GM12878 (cell line): ENCODE measurements at regions of chr19 and their contacts with region 1.

Region 1: DNA sequence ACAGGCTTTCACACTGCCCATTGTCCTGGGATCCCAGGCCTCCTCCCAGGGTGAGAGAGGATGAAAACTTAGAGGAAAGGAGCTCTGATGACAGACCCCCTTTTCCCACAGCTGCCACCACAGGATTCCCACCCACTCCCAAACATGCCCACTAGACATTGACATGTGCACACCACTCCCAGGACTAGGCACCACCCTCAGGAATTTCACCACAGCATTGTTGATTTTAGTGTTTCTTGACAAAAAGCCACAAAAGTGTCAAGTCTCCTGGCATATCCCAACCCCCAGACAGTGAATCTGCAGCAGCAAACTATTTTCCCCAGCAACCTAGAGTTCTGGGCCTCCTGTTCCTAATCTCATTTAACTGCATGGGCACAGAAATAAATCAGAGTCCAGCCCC is 10.1 kb downstream of the ZNF714 start:
- DNase-seq: no peak
- ATAC-seq: no peak
- H3K4me3 ChIP-seq: no peak overlapping the region
- H3K27ac ChIP-seq: no peak overlapping the region
- H3K4me1 ChIP-seq: no peaks in the 10 kb centered on the region
- H3K27me3 ChIP-seq: no peaks in the 10 kb centered on the region
- CTCF ChIP-seq: no peak
- EP300 ChIP-seq: no peak
- POLR2A ChIP-seq: no peak
- RAD21 ChIP-seq: no peak

Region 2: DNA sequence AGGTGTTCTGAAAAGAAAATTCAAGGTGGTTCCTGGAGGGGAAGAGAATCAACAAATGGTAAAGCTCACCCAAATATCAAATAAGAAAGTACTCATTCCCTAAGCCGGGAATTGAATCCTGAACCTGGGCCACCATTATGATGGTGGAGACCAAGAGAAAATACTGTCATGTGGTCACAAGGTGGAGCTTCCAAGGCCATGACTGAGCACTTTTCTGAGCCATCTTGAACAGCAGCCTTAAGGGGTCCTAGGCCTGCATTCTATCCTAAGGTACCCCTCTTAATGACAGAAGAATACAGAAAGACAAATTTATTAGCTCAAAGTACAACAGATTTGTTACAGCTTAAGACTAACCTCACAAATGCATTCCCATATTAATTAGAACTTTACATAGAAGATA is 59.4 kb after region 1 on chr19:
- CTCF ChIA-PET with region 1: no interaction called
- POLR2A ChIA-PET with region 1: no interaction called
- RAD21 ChIA-PET with region 1: no interaction called
- SMC1A ChIA-PET with region 1: no interaction called
- in situ Hi-C with region 1: loop called (anchors 5 kb)
- intact Hi-C with region 1: loop called (anchors 1 kb)
- DNase-seq: no peak
- ATAC-seq: no peak
- H3K4me3 ChIP-seq: no peak overlapping the region
- H3K27ac ChIP-seq: no peak overlapping the region
- H3K4me1 ChIP-seq: no peaks in the 10 kb centered on the region
- H3K27me3 ChIP-seq: no peaks in the 10 kb centered on the region
- CTCF ChIP-seq: no peak
- EP300 ChIP-seq: no peak
- POLR2A ChIP-seq: no peak
- RAD21 ChIP-seq: no peak

Region 3: DNA sequence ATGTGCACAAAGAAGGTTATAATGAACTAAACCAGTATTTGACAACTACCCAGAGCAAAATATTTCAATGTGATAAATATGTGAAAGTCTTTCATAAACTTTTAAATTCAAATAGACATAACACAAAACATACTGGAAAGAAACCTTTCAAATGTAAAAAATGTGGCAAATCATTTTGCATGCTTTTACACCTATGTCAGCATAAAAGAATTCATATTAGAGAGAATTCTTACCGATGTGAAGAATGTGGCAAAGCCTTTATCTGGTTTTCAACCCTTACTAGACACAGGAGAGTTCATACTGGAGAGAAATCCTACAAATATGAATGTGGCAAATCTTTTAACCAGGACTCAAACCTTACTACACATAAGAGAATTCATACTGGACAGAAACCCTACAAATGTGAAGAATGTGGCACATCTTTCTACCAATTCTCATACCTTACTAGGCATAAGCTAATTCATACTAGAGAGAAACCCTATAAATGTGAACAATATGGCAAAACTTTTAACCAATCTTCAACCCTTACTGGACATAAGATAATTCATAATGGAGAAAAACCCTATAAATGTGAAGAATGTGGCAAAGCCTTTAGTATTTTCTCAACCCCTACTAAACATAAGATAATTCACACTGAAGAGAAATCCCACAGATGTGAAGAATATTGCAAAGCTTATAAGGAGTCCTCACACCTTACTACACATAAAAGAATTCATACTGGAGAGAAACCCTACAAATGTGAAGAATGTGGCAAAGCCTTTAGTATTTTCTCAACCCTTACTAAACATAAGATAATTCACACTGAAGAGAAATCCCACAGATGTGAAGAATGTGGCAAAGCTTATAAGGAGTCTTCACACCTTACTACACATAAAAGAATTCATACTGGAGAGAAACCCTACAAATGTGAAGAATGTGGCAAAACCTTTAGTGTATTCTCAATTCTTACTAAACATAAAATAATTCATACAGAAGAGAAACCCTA is 331.2 kb after region 1 on chr19:
- CTCF ChIA-PET with region 1: no interaction called
- POLR2A ChIA-PET with region 1: no interaction called
- RAD21 ChIA-PET with region 1: no interaction called
- SMC1A ChIA-PET with region 1: no interaction called
- in situ Hi-C with region 1: no loop called
- intact Hi-C with region 1: no loop called
- DNase-seq: no peak
- ATAC-seq: no peak
- H3K4me3 ChIP-seq: no peak overlapping the region
- H3K27ac ChIP-seq: no peak overlapping the region
- H3K4me1 ChIP-seq: no peaks in the 10 kb centered on the region
- H3K27me3 ChIP-seq: no peaks in the 10 kb centered on the region
- CTCF ChIP-seq: no peak
- EP300 ChIP-seq: no peak
- POLR2A ChIP-seq: no peak
- RAD21 ChIP-seq: no peak